Pancreas (tissue), 10 donors: ENCODE measurements at regions of chr1 and their contacts with region 1.

Region 1: DNA sequence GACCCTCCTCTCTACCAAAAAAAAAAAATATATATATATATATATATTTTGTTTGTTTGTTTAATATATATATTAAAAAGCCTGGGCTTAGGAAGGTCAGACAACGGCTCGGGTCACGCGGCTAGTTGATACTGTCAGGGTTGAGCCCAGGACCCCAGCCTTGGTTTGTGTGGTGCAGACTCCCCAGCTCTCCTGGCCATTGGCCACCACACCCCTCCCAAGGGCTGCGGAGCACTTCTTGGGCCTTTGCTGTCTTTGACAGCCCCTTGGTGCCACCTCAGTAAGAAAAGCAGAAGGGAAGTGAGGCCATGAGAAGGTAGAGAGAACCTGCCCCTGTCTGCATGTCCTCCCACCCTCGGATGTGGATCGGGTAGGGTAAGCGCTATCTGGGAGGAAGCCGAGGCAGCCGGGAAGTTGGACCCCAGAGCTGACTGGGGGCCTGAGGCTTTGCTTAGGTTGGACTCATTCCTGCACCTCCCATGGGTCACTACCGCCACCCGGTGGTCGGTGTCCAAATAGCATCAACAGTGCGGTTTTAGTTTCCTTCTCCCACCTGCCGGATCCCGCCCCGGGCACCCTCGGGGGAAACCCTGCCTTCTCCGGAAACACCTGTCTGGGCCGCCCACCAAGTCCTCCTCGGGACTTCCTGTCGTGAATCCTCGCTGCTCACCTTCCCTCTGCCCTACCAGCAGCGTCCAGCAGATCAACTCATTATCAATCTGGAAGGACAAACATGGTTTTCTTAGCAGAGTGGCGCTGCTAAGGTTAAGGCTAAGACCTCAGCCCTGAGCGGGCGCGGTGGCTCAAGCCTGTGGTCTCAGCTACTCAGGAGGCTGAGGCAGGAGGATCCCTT is 29.8 kb upstream of the GNPAT start:
- DNase-seq: peak; percentile 76 to 97 (median 89)
- ATAC-seq: peak; percentile 88 to 99 (median 98)
- H3K4me3 ChIP-seq: peak overlapping the region in 3 of 4 donors; percentile 23 to 57 (median 40)
- H3K27ac ChIP-seq: peak overlapping the region in 2 of 4 donors; percentile 22 to 41
- H3K4me1 ChIP-seq: no peaks in the 10 kb centered on the region
- H3K27me3 ChIP-seq: no peaks in the 10 kb centered on the region
- CTCF ChIP-seq: peak; percentile 63 to 92 (median 84)

Region 2: GRCh38 chr1:230797942-230798418 is 413.3 kb before region 1 on chr1:
- intact Hi-C with region 1: loop called in 2 of 3 experiments (anchors 5 to 10 kb)
- DNase-seq: peak; percentile 39 to 66 (median 54)
- ATAC-seq: peak; percentile 92 to 98 (median 95)
- H3K4me3 ChIP-seq: no peak overlapping the region
- H3K27ac ChIP-seq: no peak overlapping the region
- H3K4me1 ChIP-seq: no peaks in the 10 kb centered on the region
- H3K27me3 ChIP-seq: no peaks in the 10 kb centered on the region
- CTCF ChIP-seq: peak; percentile 49 to 56 (median 53)

Region 3: DNA sequence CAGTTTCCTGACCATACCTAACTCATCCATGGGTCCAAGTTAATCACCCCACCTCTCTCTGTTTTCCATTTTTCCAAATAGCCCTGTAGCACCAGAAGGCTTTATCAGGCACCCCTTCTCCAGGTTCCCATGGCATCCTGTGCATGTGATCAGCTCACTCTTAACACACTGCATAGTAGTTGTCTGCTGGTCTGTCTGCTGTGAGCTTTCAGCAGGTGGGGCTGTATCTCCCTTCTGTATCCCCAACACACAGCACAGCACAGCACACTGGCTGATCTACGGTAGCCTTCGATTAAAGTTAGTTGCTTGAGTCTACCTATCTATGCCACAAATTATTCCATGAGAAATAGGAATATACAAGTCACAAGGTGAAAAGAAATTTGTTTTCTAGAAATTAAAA is 288.6 kb before region 1 on chr1:
- intact Hi-C with region 1: loop called (anchors 5 to 10 kb)
- DNase-seq: no peak
- ATAC-seq: peak in 3 of 4 donors; percentile 42 to 68 (median 53)
- H3K4me3 ChIP-seq: no peak overlapping the region
- H3K27ac ChIP-seq: no peak overlapping the region
- H3K4me1 ChIP-seq: no peaks in the 10 kb centered on the region
- H3K27me3 ChIP-seq: no peaks in the 10 kb centered on the region
- CTCF ChIP-seq: no peak

Region 4: GRCh38 chr1:231500666-231501065 is 289.4 kb after region 1 on chr1:
- intact Hi-C with region 1: no loop called
- DNase-seq: no peak
- ATAC-seq: no peak
- H3K4me3 ChIP-seq: no peak overlapping the region
- H3K27ac ChIP-seq: no peak overlapping the region
- H3K4me1 ChIP-seq: no peaks in the 10 kb centered on the region
- H3K27me3 ChIP-seq: no peaks in the 10 kb centered on the region
- CTCF ChIP-seq: no peak